Thyroid gland (tissue), 4 donors: ENCODE measurements at regions of chrX and their contacts with region 1.

Region 1: DNA sequence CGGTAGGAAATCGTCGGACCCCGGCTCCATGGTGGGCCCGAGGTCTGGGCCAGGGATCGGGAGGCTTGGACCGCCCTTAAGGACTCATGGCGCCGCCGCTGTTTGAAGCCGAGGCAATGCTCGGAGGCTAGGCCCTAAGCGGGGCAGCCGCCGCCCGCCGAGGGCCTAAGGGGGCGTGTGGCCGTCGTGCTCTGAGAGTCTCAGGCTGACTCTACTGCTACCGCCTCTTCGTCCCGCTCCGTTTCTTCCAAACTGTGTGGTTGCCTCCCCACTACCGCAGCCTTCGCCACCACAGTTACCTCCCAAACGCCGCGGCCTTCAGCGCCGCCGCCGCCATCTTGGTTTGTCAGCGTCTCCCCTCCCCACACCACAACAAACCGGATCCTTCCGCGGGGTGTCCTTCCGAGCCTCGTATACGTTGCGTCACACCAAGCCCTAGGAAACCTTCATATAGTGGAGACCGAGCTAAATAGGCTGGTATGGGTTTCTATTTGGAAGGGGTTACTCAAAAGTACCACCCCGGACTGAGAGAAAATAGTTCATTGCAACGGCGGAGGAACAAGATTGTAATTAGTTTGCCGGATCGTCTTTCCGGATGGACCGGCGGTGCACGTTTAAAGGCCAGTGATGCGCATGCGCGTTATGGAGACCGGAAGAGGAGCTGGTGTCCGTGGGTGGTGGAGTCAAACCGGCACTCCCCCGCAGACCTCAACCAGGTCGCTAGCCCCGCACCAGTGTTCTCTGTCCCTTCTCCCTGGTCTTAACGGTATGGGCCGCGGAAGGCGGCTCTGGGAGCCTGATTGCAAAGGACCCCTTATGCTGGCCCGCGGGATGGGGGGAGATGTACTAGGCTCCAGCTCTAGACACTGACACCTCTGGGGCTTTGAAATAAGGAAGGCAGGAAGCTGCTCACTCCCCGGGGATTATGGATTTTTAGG is at the start of gene KDM5C:
- DNase-seq: peak; percentile 85 to 90
- H3K4me3 ChIP-seq: peak within 1 kb of the TSS; percentile 59 to 79 (median 64)
- H3K27ac ChIP-seq: peak within 1 kb of the TSS; percentile 83 to 94 (median 84)
- H3K4me1 ChIP-seq: peaks cover 23 to 29% of the 10 kb centered on the region in 2 donors
- H3K27me3 ChIP-seq: no peaks in the 10 kb centered on the region
- CTCF ChIP-seq: no peak
- POLR2A ChIP-seq: peak in 1 of 2 donors; percentile 72
- total RNA-seq, gene KDM5C: 99.7 to 178 (median 114) TPM

Region 2: GRCh38 chrX:52988985-52989935 is 235.9 kb before region 1 on chrX:
- intact Hi-C with region 1: no loop called
- DNase-seq: no peak
- H3K4me3 ChIP-seq: no peak overlapping the region
- H3K27ac ChIP-seq: no peak overlapping the region
- H3K4me1 ChIP-seq: no peaks in the 10 kb centered on the region
- H3K27me3 ChIP-seq: no peaks in the 10 kb centered on the region
- CTCF ChIP-seq: no peak
- POLR2A ChIP-seq: no peak

Region 3: GRCh38 chrX:53071604-53072417 is 153.3 kb before region 1 on chrX:
- intact Hi-C with region 1: loop called (anchors 10 kb)
- DNase-seq: peak; percentile 82 to 84
- H3K4me3 ChIP-seq: no peak overlapping the region
- H3K27ac ChIP-seq: peak overlapping the region; percentile 70 to 89 (median 80)
- H3K4me1 ChIP-seq: peaks cover 0 to 7% of the 10 kb centered on the region in 2 donors
- H3K27me3 ChIP-seq: no peaks in the 10 kb centered on the region
- CTCF ChIP-seq: peak; percentile 30 to 84 (median 52)
- POLR2A ChIP-seq: no peak

Region 4: GRCh38 chrX:53195401-53195800 is 29.7 kb before region 1 on chrX:
- intact Hi-C with region 1: no loop called
- DNase-seq: no peak
- H3K4me3 ChIP-seq: no peak overlapping the region
- H3K27ac ChIP-seq: no peak overlapping the region
- H3K4me1 ChIP-seq: no peaks in the 10 kb centered on the region
- H3K27me3 ChIP-seq: no peaks in the 10 kb centered on the region
- CTCF ChIP-seq: no peak
- POLR2A ChIP-seq: no peak

Region 5: DNA sequence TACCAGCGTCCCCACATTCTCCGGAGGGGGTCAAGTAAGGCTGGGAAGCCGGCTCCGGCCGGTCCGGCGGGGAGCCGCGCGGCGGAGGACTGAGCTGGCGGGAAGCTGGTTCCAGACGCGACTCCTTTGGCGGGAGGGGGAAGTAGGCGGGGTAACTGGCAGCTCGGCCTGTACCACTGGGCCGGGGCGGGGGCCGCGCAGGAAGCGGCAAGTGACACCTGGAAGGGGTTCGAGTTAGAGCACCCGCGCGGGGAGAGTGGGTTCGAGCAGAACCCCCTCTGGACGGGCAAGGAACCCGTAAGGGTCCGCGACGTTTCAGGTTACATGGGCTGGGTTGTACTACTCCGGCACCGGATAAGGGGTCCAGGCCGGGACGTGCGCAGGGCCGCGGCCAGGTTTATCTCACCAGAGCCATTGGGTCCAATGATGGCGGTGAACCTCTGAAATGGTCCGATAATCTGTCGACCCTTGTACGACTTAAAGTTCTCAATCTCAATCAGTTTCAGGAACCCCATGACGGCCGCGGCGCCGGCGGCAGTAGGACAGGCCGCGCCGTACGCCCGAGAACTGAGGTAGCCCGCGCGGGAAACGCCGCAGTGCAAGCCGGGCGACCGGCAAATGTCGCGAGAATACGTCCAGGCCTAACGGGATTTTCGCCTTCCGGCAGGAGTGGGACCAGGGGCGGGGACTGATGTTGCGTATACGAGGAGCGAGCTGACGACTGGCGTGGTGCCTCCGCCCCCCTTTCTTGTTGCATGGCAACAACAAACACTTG is 197.1 kb after region 1 on chrX and contains the start of gene SMC1A:
- intact Hi-C with region 1: loop called (anchors 10 kb)
- DNase-seq: peak; percentile 96 to 97
- H3K4me3 ChIP-seq: peak within 1 kb of the TSS in 2 of 3 donors; percentile 59 to 60
- H3K27ac ChIP-seq: peak within 1 kb of the TSS; percentile 78 to 87 (median 78)
- H3K4me1 ChIP-seq: peaks cover 8 to 20% of the 10 kb centered on the region in 2 donors
- H3K27me3 ChIP-seq: no peaks in the 10 kb centered on the region
- CTCF ChIP-seq: no peak
- POLR2A ChIP-seq: peak in 1 of 2 donors; percentile 70
- total RNA-seq, gene SMC1A: 35.0 to 43.7 (median 36.9) TPM